Activated T-helper 1 cell treated with anti-CD3 and anti-CD28 coated beads, Interleukin-12 subunit alpha, Interleukin-12 subunit beta, Interleukin-2, Interleukin-4 antibody, amounts not matched to agents 30 ng/mL and 10 ng/mL and 1 ng/mL, durations not matched to agents 14 hours and 24 hours and 36 hours (primary cell): ENCODE measurements at regions of chr7 and their contacts with region 1.

Region 1: DNA sequence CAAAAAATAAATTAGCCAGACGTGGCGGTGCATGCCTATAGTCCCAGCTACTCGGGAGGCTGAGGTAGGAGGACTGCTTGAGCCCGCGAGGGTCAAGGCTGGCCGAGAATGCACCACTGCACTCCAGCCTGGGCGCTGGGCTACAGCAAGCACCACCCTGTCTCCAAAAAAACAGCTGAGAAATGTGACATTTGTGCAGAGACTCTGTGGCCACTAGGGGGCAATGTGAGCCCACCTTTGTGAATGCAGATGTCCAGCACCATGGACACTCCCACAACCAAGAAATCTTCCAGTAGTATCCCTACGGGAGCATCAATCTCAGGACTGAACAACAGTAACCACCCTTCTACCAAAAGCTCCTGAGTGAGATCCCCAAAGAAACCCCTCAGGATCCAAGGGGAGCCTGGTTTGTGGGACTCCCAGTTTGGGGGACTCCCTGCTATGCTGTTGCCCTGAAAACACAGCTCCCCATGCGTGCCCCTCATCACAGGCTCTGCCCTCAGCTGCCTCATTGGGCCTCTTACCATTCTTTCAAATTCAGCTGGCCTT is 6.2 kb upstream of the AHCYL2 start:
- DNase-seq: peak; percentile 67
- H3K4me3 Mint-ChIP-seq: no peak overlapping the region
- H3K27ac Mint-ChIP-seq: no peak overlapping the region
- H3K4me1 Mint-ChIP-seq: peaks cover 11% of the 10 kb centered on the region
- H3K27me3 Mint-ChIP-seq: peaks cover 9% of the 10 kb centered on the region

Region 2: DNA sequence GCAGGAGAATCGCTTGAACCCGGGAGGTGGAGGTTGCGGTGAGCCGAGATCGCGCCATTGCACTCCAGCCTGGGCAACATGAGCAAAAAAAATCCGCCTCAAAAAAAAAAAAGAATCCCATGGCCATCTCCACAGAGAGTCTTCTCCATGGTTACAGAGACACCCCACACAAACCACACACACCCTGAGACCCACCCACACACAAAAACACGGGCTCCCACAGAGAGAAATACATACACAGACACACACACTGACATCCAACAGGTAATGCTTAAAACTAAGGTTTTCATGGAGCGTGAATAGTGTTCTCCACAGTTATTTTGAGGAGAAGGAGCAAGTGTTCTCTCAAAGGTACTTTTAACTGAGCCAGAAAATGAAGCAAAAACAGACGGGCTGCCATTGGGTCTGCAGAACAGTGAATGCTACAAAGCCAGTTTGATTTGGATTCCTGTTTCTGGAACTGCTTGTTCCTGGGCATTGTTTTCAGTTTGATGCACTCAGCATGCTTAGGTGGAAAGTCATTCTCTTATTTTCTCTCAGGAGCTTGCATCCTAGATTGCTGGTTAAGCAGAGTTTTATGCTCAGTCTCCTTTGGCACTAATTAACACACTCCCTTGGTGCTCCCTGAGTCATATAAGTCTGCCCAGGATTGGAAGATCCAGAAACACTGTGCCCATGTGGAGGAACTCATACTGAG is 21.7 kb after region 1 on chr7:
- intact Hi-C with region 1: no loop called
- DNase-seq: no peak
- H3K4me3 Mint-ChIP-seq: no peak overlapping the region
- H3K27ac Mint-ChIP-seq: no peak overlapping the region
- H3K4me1 Mint-ChIP-seq: no peaks in the 10 kb centered on the region
- H3K27me3 Mint-ChIP-seq: no peaks in the 10 kb centered on the region

Region 3: DNA sequence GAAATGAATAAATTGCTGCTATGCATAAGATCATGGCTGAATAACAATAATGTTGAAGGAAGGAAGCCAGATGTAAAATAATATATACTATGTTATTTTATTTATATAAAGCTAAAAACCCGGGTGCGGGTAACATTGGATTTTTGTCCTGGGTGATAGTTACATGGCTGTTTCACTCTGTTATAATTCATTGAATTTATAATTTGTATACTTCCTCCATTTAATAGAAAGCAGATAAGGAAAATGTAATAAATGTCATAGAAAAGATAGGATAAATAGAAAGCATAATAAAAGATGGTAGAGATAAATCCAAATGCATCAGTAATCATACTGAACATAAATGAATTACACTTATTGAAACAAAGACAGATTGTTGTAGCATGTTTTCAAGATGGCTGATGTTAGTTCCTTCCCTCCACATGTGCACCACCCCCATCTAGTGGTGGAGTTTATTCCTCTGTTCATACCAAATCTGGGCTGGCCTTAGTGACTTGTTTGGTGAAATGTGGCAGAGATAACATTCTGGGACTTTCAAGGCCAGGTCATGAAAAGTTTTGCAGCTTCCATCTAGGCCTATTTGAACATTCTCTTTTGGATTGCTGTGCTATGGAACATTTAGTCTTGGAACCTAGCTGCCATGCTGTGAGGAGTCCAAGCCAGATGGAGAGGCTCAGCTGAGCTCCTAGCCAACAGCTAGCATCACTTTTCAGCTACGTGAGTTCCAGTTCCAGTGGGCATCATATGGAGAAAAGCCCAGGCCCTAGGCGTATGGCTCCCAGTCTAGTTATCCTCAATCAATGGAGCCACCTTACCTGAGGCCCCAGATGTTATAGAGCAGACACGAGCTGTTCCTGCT is 53.1 kb after region 1 on chr7:
- intact Hi-C with region 1: loop called (anchors 1 kb)
- DNase-seq: peak; percentile 58
- H3K4me3 Mint-ChIP-seq: no peak overlapping the region
- H3K27ac Mint-ChIP-seq: no peak overlapping the region
- H3K4me1 Mint-ChIP-seq: peaks cover 9% of the 10 kb centered on the region
- H3K27me3 Mint-ChIP-seq: no peaks in the 10 kb centered on the region

Region 4: DNA sequence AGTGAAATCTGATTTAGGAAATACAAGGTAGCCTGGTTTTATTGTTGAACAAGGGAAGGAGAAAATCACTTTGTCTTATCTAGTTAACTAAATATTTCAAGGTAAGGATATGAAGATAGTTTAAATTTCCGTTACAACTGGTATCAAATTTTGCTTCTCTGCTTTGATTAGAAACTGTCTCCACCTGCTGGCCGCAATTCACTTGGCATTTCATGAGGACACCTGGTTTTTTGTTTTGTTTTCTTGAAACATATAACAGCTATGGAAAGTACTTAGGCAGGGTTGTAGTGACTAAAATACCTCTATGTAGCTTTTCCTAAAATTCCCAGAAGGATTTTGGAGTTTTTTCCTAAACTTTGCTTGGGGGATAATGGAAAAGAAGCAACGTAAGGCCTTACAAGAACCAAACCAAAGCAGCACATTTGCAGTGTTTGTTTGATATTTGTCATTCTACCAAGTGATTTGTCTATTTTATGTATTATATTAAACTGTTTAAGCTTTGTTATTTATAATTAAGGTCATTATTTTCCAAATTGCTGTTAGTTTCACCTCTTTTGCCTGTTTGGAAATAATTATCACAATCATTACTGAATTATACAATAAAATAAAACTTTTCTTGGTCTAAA is 79.8 kb after region 1 on chr7:
- intact Hi-C with region 1: loop called (anchors 1 kb)
- DNase-seq: peak; percentile 13
- H3K4me3 Mint-ChIP-seq: no peak overlapping the region
- H3K27ac Mint-ChIP-seq: no peak overlapping the region
- H3K4me1 Mint-ChIP-seq: no peaks in the 10 kb centered on the region
- H3K27me3 Mint-ChIP-seq: peaks cover 3% of the 10 kb centered on the region

Region 5: DNA sequence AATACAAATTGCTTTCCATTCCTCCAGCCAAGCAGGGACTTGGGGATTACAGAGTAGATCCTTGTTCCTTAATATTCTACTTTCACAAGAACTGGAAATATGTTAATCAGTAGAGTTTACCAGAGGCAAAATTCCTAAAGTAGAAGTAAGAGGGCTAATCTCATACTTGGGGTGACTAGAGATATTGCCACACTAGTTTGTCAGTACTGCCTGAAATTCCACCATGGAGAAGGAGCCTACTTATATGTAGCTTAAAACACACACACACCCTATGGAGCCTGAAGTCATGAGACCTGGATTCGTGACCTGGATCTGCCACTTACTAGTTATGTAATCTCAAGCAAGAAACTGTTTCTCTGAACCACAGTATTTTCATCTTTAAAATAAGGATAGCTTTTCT is 249.5 kb after region 1 on chr7:
- intact Hi-C with region 1: loop called (anchors 1 kb)
- DNase-seq: no peak
- H3K4me3 Mint-ChIP-seq: no peak overlapping the region
- H3K27ac Mint-ChIP-seq: no peak overlapping the region
- H3K4me1 Mint-ChIP-seq: peaks cover 31% of the 10 kb centered on the region
- H3K27me3 Mint-ChIP-seq: no peaks in the 10 kb centered on the region